ENCODE measurements at regions of chr13 and their contacts with region 1.

Region 1: DNA sequence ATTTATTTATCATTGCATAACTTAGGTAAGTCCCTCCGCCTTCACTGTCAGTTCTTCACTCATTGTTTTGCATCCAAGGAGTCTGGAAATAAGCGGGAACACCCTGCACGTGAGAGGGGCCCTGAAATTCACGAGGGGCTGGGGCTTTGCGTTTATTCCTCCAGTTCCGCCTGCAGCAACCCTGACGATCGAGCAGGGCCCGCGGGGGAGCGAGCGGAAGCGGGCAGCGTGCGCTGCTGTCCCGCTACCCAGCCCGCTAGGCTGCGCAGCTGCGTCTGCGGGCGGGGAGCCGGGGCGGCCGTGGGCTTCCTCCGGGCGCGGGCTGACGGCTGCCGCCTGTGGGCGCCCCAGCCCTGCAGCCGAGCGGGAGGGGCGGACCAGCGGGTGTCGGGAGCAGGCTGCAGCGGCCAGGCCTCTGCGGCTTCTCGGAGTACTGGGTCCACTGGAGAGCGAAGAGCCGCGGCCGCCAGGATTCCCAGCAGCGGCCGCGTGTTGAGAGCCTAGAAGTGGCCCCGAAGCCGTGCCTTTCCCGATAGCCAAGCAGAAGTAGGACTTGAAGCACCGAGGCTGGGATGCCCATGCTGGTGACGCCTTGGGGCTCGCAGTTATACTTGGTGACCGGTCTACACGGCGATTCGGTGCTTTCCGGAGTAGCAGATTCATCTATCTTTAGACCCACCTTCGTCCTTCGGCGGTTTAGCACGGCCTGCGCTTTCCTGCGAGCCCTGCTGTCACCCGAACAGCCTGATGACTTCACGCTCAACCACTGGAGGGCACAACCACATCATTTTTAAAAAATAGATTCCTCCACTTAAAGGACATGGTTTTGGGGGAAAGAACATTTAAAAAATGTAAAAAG is 32.9 kb upstream of the SACS start:
- DNase-seq: peak; percentile 86

Region 2: DNA sequence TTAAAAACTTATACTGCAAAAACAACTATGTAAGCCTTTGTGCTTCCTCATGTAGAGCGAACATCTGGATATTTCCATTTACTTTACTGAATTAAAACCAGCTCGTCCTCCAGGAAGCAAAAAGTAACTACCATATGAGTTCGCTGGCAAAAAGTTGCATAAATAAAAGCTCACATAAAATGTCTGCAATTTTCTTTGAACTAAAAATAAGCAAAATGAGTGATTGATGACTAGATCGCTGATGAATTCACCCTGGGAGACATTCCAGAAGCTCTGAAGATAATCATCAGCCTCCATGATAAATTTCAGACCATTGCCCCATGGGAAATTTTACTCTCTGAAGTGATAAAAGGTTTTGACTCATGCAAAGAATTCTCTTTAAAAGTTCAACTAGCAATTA is 34.5 kb after region 1 on chr13:
- intact Hi-C with region 1: loop called (anchors 5 kb)
- DNase-seq: no peak

Region 3: DNA sequence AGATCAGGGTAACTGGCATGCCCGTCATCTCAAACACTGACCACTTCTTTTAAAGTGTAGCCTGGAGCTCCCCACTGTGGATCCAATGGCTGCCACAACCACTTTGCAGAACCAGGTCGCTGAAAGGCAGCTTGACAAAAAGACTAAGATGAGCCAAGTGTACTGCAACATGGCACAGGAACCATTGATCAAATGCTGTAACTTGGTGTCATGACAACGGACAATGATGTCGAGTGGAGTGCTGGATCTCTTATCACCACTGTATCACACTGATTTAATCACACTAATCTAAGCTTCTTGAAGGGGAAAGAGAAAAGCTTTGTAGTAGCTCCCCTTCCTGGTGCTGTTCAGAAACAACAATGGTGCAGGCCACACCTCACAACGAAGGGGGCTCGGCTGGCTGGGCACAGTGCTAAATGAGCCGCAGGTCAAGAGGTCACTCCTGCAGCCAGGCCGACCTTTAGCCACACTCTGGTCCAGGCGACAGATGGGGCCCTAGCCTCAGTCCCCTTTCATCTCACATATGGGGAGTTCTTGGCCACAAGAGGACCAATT is 101.6 kb after region 1 on chr13:
- intact Hi-C with region 1: loop called (anchors 2 kb)
- DNase-seq: no peak

Region 4: GRCh38 chr13:23871616-23872220 is 405.3 kb after region 1 on chr13:
- intact Hi-C with region 1: loop called (anchors 2 kb)
- DNase-seq: no peak